MCF 10A (cell line): ENCODE measurements at regions of chr6 and their contacts with region 1.

Region 1: GRCh38 chr6:28586962-28587745 is 61.5 kb downstream of the GPX5 start:
- DNase-seq: peak; percentile 79
- H3K4me3 Mint-ChIP-seq: peak overlapping the region; percentile 95
- H3K27ac Mint-ChIP-seq: peak overlapping the region; percentile 92
- H3K4me1 Mint-ChIP-seq: peaks cover 30% of the 10 kb centered on the region
- H3K27me3 Mint-ChIP-seq: no peaks in the 10 kb centered on the region
- CTCF ChIP-seq: no peak

Region 2: DNA sequence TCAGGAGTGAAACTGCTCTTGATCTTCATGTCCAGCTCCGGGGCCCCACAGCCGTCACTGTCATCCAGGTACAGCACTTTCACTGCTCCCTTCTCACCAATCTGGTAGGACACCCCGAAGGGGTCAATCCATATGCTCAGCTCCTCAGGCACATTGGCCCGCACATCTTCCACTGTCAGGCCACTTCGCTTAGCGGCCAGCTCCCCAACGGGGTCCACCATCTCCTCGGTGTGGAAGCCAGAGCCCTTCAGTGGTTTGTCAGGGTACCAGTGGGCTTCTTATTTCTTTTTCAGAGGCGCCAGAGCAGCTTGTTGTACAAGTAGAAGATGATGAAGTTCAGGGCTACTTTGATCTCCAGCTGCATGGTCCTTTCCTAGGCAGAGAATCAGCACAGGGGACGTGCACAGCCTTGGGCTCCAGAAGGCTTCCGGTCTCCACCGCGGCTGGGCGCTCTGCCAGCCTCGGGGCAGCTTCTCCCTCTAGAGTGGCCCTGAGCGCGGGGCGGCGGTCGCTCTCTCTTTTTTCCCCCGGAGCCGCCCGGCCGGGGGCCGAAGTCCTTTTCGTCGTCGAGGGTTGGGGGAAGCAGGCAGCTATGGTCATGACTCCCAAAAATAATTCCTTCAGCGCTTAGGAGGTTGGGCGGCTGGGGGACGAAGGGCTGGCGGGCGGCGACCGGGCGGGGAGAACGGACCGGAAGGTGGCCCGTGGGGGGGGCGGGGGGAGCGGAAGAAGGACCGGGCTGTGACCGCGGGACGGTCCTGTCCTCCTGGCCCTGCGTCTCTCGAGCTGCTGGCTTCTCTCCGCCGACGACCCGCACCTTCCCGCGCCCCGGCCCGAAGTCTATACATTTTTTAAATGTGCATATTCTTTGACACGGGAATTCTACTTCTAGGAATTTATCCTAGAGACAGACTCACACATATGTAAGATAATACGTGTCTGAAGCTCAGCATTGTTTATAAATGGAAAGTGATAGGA is 368.6 kb before region 1 on chr6:
- CTCF ChIA-PET with region 1: no interaction called
- POLR2A ChIA-PET with region 1: interaction called, 3 read pairs
- intact Hi-C with region 1: loop called (anchors 5 kb)
- DNase-seq: peak; percentile 58
- H3K4me3 Mint-ChIP-seq: peak overlapping the region; percentile 78
- H3K27ac Mint-ChIP-seq: peak overlapping the region; percentile 76
- H3K4me1 Mint-ChIP-seq: peaks cover 6% of the 10 kb centered on the region
- H3K27me3 Mint-ChIP-seq: no peaks in the 10 kb centered on the region
- CTCF ChIP-seq: no peak

Region 3: DNA sequence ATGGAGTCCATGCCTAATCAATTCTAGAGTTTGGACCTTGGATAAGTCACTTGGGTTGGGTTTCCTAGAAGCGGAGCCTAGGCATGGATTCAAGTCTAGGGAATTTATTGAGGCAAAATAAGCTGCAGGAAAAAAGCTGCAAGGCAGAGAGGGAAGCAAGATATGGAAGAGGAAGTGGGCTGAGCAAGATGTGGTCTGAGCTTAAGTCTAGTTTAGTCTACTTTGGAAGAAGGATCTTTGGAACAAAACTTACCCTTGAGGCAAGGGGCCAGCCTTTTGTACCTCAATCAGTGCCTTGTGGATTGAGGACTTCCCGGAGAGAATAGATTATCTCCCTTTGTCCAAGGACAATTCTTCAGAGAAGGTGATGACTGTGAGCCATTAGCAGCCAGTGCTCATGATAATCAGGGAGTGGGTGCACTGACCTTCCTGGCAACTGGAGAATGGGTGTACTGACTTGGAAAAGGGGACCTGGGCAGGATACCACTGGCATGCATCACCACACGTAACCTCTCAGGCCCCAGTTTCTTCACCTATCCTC is 351.2 kb before region 1 on chr6:
- CTCF ChIA-PET with region 1: no interaction called
- POLR2A ChIA-PET with region 1: no interaction called
- intact Hi-C with region 1: no loop called
- DNase-seq: no peak
- H3K4me3 Mint-ChIP-seq: no peak overlapping the region
- H3K27ac Mint-ChIP-seq: no peak overlapping the region
- H3K4me1 Mint-ChIP-seq: no peaks in the 10 kb centered on the region
- H3K27me3 Mint-ChIP-seq: no peaks in the 10 kb centered on the region
- CTCF ChIP-seq: no peak

Region 4: GRCh38 chr6:28258877-28259767 is 328.0 kb before region 1 on chr6 and contains the start of gene NKAPL:
- CTCF ChIA-PET with region 1: no interaction called
- POLR2A ChIA-PET with region 1: no interaction called
- intact Hi-C with region 1: no loop called
- DNase-seq: no peak
- H3K4me3 Mint-ChIP-seq: no peak within 1 kb of the TSS
- H3K27ac Mint-ChIP-seq: no peak within 1 kb of the TSS
- H3K4me1 Mint-ChIP-seq: no peaks in the 10 kb centered on the region
- H3K27me3 Mint-ChIP-seq: no peaks in the 10 kb centered on the region
- CTCF ChIP-seq: no peak
- total RNA-seq, gene NKAPL: not detected in 2 replicates

Region 5: GRCh38 chr6:28489366-28490204 is 97.6 kb before region 1 on chr6:
- CTCF ChIA-PET with region 1: interaction called, 12 read pairs
- POLR2A ChIA-PET with region 1: interaction called, 14 read pairs
- intact Hi-C with region 1: loop called (anchors 2 kb)
- DNase-seq: peak; percentile 88
- H3K4me3 Mint-ChIP-seq: peak overlapping the region; percentile 86
- H3K27ac Mint-ChIP-seq: peak overlapping the region; percentile 97
- H3K4me1 Mint-ChIP-seq: peaks cover 5% of the 10 kb centered on the region
- H3K27me3 Mint-ChIP-seq: no peaks in the 10 kb centered on the region
- CTCF ChIP-seq: no peak

Region 6: GRCh38 chr6:28537509-28538140 is 49.5 kb before region 1 on chr6:
- CTCF ChIA-PET with region 1: interaction called, 19 read pairs
- POLR2A ChIA-PET with region 1: interaction called, 12 read pairs
- intact Hi-C with region 1: loop called (anchors 1 kb)
- DNase-seq: peak; percentile 38
- H3K4me3 Mint-ChIP-seq: peak overlapping the region; percentile 47
- H3K27ac Mint-ChIP-seq: no peak overlapping the region
- H3K4me1 Mint-ChIP-seq: peaks cover 7% of the 10 kb centered on the region
- H3K27me3 Mint-ChIP-seq: no peaks in the 10 kb centered on the region
- CTCF ChIP-seq: no peak

Region 7: GRCh38 chr6:28597217-28598005 is 10.3 kb after region 1 on chr6:
- CTCF ChIA-PET with region 1: interaction called, 3 read pairs
- POLR2A ChIA-PET with region 1: interaction called, 43 read pairs
- intact Hi-C with region 1: no loop called
- DNase-seq: peak; percentile 73
- H3K4me3 Mint-ChIP-seq: peak overlapping the region; percentile 76
- H3K27ac Mint-ChIP-seq: peak overlapping the region; percentile 74
- H3K4me1 Mint-ChIP-seq: no peaks in the 10 kb centered on the region
- H3K27me3 Mint-ChIP-seq: no peaks in the 10 kb centered on the region
- CTCF ChIP-seq: no peak

Region 8: DNA sequence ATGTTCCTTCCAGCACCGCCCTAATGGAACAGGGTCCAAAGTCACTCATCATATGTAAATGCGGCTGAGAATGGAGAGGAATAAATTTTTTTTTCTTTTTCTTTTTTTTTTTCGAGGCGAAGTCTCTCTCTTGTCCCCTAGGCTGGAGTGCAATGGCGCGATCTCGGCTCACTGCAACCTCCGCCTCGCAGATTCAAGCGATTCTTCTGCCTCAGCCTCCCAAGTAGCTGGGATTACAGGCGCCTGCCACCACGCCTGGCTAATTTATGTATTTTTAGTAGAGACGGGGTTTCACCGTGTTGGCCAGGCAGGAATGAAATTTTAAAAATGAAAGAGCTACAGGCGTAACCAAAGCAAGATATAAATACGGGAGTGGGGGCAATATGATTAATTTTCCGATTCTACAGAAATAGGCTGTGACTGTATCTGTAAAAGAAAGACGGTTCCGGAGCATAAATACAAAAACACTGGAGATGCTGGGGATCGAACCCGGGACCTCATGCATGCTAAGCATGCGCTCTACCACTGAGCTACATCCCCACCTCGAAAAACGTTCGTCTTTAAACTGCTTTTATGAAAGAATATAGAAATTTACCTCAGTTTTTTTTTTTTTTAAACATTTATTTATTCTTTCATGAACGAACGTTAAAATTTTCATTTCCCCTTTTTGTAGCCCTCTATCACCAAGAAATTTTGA is 70.8 kb after region 1 on chr6:
- CTCF ChIA-PET with region 1: interaction called, 3 read pairs
- POLR2A ChIA-PET with region 1: interaction called, 6 read pairs
- intact Hi-C with region 1: loop called (anchors 5 kb)
- DNase-seq: peak; percentile 60
- H3K4me3 Mint-ChIP-seq: peak overlapping the region; percentile 69
- H3K27ac Mint-ChIP-seq: no peak overlapping the region
- H3K4me1 Mint-ChIP-seq: peaks cover 6% of the 10 kb centered on the region
- H3K27me3 Mint-ChIP-seq: no peaks in the 10 kb centered on the region
- CTCF ChIP-seq: no peak

Region 9: DNA sequence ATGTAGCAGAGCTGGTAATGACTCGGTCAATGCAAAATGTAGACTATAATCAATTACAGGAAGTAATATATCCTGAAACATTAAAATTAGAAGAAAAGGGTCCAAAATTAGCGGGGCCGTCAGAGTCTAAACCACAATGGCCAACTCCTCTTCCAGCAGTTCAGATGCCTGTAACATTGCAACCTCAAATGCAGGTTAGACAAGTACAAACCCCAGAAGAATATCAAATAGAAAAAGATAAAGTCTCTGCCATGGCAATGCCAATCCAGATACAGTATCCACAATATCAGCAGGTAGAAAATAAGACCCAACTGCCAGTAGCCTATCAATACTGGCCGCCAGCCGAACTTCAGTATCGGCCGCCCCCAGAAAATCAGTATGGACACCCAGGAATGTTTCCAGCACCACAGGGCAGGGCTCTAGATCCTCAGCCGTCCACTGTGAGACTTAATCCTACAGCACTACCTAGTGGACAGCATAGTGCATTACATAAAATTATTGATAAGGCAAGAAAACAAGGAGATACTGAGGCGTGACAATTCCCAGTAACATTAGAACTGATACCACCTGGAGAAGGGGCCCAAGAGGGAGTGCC is 96.9 kb after region 1 on chr6:
- CTCF ChIA-PET with region 1: interaction called, 11 read pairs
- POLR2A ChIA-PET with region 1: no interaction called
- intact Hi-C with region 1: loop called (anchors 1 kb)
- DNase-seq: peak; percentile 70
- H3K4me3 Mint-ChIP-seq: no peak overlapping the region
- H3K27ac Mint-ChIP-seq: no peak overlapping the region
- H3K4me1 Mint-ChIP-seq: peaks cover 19% of the 10 kb centered on the region
- H3K27me3 Mint-ChIP-seq: no peaks in the 10 kb centered on the region
- CTCF ChIP-seq: peak; percentile 77

Region 10: GRCh38 chr6:28721372-28721771 is 134.2 kb after region 1 on chr6:
- CTCF ChIA-PET with region 1: no interaction called
- POLR2A ChIA-PET with region 1: no interaction called
- intact Hi-C with region 1: no loop called
- DNase-seq: no peak
- H3K4me3 Mint-ChIP-seq: no peak overlapping the region
- H3K27ac Mint-ChIP-seq: no peak overlapping the region
- H3K4me1 Mint-ChIP-seq: peaks cover 3% of the 10 kb centered on the region
- H3K27me3 Mint-ChIP-seq: no peaks in the 10 kb centered on the region
- CTCF ChIP-seq: no peak